GM12878 (cell line): ENCODE measurements at regions of chr17 and their contacts with region 1.

Region 1: GRCh38 chr17:3683054-3683511 is 12.9 kb downstream of the P2RX5 start:
- DNase-seq: peak; percentile 48
- ATAC-seq: peak; percentile 95
- H3K4me3 ChIP-seq: no peak overlapping the region
- H3K27ac ChIP-seq: no peak overlapping the region
- H3K4me1 ChIP-seq: peaks cover 6% of the 10 kb centered on the region; the same call in 1 of the 2 replicates
- H3K27me3 ChIP-seq: no peaks in the 10 kb centered on the region
- CTCF ChIP-seq: peak; percentile 85 to 98 (median 94)
- EP300 ChIP-seq: no peak
- POLR2A ChIP-seq: peak; percentile 44; the same call in 1 of the 2 replicates
- RAD21 ChIP-seq: peak; percentile 94

Region 2: GRCh38 chr17:3602499-3602898 is 80.6 kb before region 1 on chr17:
- CTCF ChIA-PET with region 1: no interaction called
- POLR2A ChIA-PET with region 1: no interaction called
- RAD21 ChIA-PET with region 1: no interaction called
- SMC1A ChIA-PET with region 1: no interaction called
- in situ Hi-C with region 1: no loop called
- intact Hi-C with region 1: no loop called
- DNase-seq: no peak
- ATAC-seq: peak; percentile 88
- H3K4me3 ChIP-seq: no peak overlapping the region
- H3K27ac ChIP-seq: no peak overlapping the region
- H3K4me1 ChIP-seq: no peaks in the 10 kb centered on the region
- H3K27me3 ChIP-seq: no peaks in the 10 kb centered on the region
- CTCF ChIP-seq: peak; percentile 40 to 69 (median 47)
- EP300 ChIP-seq: no peak
- POLR2A ChIP-seq: no peak
- RAD21 ChIP-seq: 0 out of 2 replicates have a peak, but pooled peaks have one; percentile 23

Region 3: DNA sequence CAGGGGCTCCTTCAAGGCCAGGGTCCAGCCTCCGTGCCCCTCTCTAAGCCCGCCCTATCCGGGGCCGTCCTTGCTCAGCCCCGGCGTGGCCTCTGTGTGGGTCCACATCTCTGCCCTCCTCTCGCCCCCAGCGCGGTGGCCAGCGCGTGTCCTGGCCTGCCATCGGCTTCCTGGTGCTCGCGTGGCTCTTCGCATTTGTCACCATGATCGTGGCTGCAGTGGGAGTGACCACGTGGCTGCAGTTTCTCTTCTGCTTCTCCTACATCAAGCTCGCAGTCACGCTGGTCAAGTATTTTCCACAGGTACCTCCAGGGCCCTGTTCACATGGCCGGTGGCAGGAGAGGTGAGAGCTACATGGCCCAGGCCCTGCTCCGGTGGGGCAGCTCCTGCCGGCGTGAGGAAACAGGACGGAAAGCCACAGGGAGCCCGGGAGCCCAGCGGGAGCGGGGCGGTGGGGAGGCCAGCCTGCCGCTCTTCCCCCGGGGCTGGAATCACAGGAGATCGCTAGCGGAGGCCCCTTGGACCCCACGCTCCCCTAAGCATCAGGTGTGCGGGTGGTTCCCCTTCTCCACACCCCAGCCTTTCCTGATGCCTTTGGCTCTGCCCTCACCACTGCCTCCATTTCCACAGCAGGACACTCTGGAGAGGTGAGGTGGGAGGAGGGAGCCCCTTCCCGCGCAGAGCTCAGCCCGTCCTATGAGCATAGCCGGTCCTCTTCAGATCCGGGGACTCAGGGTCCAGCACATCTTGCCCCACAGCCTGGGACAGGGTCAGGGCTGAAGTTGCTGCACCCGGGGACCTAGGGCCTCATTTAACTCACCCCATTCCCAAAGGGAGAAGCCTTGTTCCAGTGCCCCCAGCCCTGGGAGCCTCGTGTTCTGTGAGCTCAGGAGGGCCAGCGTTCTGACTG is 25.0 kb before region 1 on chr17:
- CTCF ChIA-PET with region 1: no interaction called
- POLR2A ChIA-PET with region 1: no interaction called
- RAD21 ChIA-PET with region 1: no interaction called
- SMC1A ChIA-PET with region 1: no interaction called
- in situ Hi-C with region 1: no loop called
- intact Hi-C with region 1: no loop called
- DNase-seq: no peak
- ATAC-seq: no peak
- H3K4me3 ChIP-seq: no peak overlapping the region
- H3K27ac ChIP-seq: no peak overlapping the region
- H3K4me1 ChIP-seq: no peaks in the 10 kb centered on the region
- H3K27me3 ChIP-seq: no peaks in the 10 kb centered on the region
- CTCF ChIP-seq: no peak
- EP300 ChIP-seq: no peak
- POLR2A ChIP-seq: no peak
- RAD21 ChIP-seq: no peak

Region 4: DNA sequence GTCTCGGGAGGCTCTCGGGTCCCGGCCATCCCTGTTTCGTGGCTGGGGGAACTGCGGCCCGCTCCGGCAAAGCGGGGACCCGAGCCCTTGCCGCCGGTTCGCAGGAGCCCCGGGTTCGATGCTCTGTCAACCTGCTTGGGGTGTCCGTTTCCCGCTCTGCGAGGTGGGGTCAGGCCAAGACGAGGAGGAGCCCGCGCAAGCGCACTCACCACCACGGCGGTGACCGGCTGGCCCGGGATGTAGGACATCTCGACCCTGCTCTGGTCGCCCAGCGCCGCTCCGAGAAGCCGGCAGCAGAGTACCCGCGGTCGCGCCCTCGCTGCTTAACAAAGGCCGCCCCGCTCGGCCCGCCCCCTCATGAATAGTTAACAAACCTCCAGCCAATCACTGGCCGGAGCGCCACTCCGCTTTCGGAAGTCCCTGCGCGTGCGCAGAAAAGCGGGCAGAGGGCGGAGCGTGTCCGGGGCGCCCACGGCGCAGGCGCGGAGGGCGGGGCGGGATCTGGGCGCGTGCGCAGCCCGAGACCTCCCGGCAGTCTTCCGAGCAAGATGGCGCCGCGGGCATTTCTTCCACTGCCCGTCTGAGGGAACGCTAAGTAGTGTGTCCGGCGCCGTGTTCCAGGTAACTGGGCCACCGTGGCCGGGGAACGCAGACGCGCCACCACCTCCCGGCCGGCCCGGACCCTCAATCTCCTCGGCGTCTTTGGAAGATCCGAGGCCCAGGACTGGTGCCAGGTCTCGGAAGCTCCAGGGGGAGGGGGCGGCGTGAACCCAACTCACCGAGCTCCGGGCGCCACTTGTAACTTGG is 14.6 kb before region 1 on chr17 and contains the starts of genes EMC6 and TAX1BP3:
- CTCF ChIA-PET with region 1: interaction called, 10 read pairs
- POLR2A ChIA-PET with region 1: interaction called, 7 read pairs
- RAD21 ChIA-PET with region 1: no interaction called
- SMC1A ChIA-PET with region 1: interaction called, 3 read pairs
- in situ Hi-C with region 1: no loop called
- intact Hi-C with region 1: no loop called
- DNase-seq: peak; percentile 86
- ATAC-seq: peak; percentile 97
- H3K4me3 ChIP-seq: peak within 1 kb of the TSS; percentile 84
- H3K27ac ChIP-seq: peak within 1 kb of the TSS; percentile 86
- H3K4me1 ChIP-seq: peaks cover 8% of the 10 kb centered on the region
- H3K27me3 ChIP-seq: no peaks in the 10 kb centered on the region
- CTCF ChIP-seq: no peak
- EP300 ChIP-seq: no peak
- POLR2A ChIP-seq: peak; percentile 96
- RAD21 ChIP-seq: no peak
- polyA plus RNA-seq, gene EMC6: 5.1 to 32.2 TPM
- polyA plus RNA-seq, gene TAX1BP3: 1.00 to 4.7 TPM

Region 5: DNA sequence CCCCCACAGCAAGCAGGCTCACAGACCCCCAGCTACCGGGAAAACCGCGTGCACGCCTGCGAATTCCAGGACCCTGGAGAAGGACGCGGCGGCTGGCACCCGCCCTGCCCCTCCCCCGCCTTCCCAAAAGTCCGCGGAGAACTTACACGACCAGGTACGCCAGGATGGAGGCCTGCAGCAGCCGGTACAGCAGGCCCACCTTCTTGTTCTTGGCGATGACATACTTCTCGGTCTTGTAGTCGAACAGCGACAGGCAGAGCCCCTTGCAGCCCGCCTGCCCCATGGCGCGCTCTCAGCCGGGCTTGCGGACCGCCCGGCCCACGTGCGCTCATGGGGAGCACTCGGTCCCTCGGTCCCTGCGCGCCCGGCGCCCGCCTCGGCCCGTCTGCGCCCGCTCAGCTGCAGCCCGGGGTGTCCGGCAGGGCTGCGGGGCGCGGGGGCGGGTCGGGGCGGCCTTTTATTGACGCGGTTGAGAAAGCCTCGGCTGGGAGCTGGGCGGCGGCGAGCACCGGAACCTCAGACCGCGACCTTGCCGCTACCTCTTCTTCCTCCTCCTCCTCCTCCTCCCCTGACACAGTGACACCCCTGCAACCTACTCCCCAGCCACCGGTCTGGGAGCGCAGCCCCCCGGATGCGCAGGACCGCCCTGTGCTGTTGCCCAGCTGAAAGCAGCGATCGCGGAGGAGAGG is 12.8 kb after region 1 on chr17 and contains the start of gene P2RX5:
- CTCF ChIA-PET with region 1: interaction called, 10 read pairs
- POLR2A ChIA-PET with region 1: no interaction called
- RAD21 ChIA-PET with region 1: interaction called, 4 read pairs
- SMC1A ChIA-PET with region 1: interaction called, 3 read pairs
- in situ Hi-C with region 1: no loop called
- intact Hi-C with region 1: no loop called
- DNase-seq: no peak
- ATAC-seq: peak; percentile 48
- H3K4me3 ChIP-seq: peak within 1 kb of the TSS; percentile 56
- H3K27ac ChIP-seq: peak within 1 kb of the TSS; percentile 61
- H3K4me1 ChIP-seq: peaks cover 32% of the 10 kb centered on the region
- H3K27me3 ChIP-seq: no peaks in the 10 kb centered on the region
- CTCF ChIP-seq: no peak
- EP300 ChIP-seq: no peak
- POLR2A ChIP-seq: peak; percentile 71
- RAD21 ChIP-seq: no peak
- polyA plus RNA-seq, gene P2RX5: 6.9 to 14.2 TPM

Region 6: GRCh38 chr17:3723556-3724369 is 40.7 kb after region 1 on chr17 and contains the start of gene HASPIN:
- CTCF ChIA-PET with region 1: interaction called, 13 read pairs
- POLR2A ChIA-PET with region 1: no interaction called
- RAD21 ChIA-PET with region 1: interaction called, 4 read pairs
- SMC1A ChIA-PET with region 1: interaction called, 4 read pairs
- in situ Hi-C with region 1: no loop called
- intact Hi-C with region 1: no loop called
- DNase-seq: peak; percentile 62
- ATAC-seq: peak; percentile 93
- H3K4me3 ChIP-seq: peak within 1 kb of the TSS; percentile 93
- H3K27ac ChIP-seq: peak within 1 kb of the TSS; percentile 87
- H3K4me1 ChIP-seq: peaks cover 17% of the 10 kb centered on the region
- H3K27me3 ChIP-seq: no peaks in the 10 kb centered on the region
- CTCF ChIP-seq: peak in 2 of 3 experiments; percentile 12 to 17; a peak in 1 of 6 replicates
- EP300 ChIP-seq: no peak
- POLR2A ChIP-seq: peak; percentile 83
- RAD21 ChIP-seq: no peak
- polyA plus RNA-seq, gene HASPIN: 0.80 to 0.97 TPM

Region 7: DNA sequence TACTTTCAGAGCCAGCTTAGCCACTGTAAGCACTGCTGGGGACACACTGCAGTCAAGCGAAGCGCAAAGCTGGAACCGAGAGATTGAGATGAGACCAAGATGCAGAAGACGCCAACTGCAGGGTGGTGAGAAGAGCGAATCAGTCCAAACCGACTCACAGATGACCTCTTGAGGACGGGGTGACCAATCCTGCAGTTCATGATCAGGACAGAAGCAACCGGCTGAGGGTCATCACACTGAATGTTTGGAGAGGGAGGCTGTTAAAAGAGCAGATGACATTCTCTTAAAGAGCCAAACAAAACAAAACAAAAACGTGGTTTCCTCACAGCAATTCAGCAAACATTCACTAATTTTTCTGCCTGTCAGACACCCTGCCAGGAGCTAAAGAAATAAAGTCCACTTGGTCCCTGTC is 49.1 kb after region 1 on chr17:
- CTCF ChIA-PET with region 1: interaction called, 105 read pairs
- POLR2A ChIA-PET with region 1: no interaction called
- RAD21 ChIA-PET with region 1: interaction called, 24 read pairs
- SMC1A ChIA-PET with region 1: interaction called, 17 read pairs
- in situ Hi-C with region 1: no loop called
- intact Hi-C with region 1: loop called (anchors 2 kb)
- DNase-seq: peak; percentile 60
- ATAC-seq: peak; percentile 98
- H3K4me3 ChIP-seq: no peak overlapping the region
- H3K27ac ChIP-seq: no peak overlapping the region
- H3K4me1 ChIP-seq: peaks cover 7% of the 10 kb centered on the region; the same call in 1 of the 2 replicates
- H3K27me3 ChIP-seq: no peaks in the 10 kb centered on the region
- CTCF ChIP-seq: peak; percentile 44 to 62 (median 48); a peak in 4 of 6 replicates
- EP300 ChIP-seq: no peak
- POLR2A ChIP-seq: no peak
- RAD21 ChIP-seq: peak; percentile 60

Region 8: DNA sequence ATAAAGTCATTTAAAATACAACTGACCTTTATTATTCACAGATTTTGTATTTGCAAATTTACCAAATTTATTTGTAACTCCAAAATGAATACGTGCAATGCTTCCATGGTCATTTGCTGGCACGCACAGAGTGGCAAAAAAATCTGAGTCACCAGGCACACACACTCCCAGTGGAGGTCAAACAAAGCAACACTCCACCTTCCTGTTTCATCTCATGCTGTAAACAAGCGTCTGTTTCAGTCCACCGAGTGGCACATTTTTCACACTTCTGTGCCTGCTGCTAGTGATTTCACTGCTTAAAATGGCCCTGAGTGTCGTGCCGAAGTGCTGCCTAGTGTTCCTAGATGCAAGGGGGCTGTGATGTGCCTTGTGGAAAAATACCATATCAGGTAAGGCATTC is 135.7 kb after region 1 on chr17:
- CTCF ChIA-PET with region 1: no interaction called
- POLR2A ChIA-PET with region 1: interaction called, 3 read pairs
- RAD21 ChIA-PET with region 1: no interaction called
- SMC1A ChIA-PET with region 1: no interaction called
- in situ Hi-C with region 1: loop called (anchors 5 kb)
- intact Hi-C with region 1: no loop called
- DNase-seq: no peak
- ATAC-seq: no peak
- H3K4me3 ChIP-seq: no peak overlapping the region
- H3K27ac ChIP-seq: no peak overlapping the region
- H3K4me1 ChIP-seq: peaks cover 6% of the 10 kb centered on the region; the same call in 1 of the 2 replicates
- H3K27me3 ChIP-seq: no peaks in the 10 kb centered on the region
- CTCF ChIP-seq: no peak
- EP300 ChIP-seq: no peak
- POLR2A ChIP-seq: no peak
- RAD21 ChIP-seq: no peak

Region 9: DNA sequence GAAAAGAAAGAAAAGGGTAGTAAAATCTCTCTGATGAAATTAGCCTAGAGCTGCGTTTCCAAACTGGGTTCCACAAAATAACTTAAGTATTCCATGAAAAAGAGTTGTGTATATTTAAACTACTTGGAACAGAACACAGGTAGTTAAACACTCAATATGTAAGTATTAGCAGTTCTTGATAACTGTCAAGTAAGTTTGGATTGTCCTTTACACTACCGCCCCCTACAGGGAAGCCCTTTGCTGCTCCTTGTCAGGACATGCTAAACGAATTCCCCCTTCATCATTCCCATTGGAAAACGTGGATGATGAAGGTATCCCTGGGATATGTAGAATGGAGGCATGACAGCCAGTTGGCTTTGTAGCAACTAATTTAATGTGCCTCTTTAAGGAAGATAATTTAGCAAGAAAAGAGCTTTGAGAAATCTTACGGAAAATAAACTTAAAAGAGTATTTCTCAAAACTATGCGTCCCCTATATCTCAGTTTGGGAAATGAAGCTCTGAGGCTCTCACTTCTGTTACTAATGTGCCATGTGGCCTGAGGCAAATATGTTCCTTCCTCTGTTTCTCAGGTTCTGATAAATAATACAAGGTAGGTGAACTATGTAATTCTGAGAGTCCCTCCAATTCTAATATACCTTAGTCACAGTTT is 144.2 kb after region 1 on chr17:
- CTCF ChIA-PET with region 1: interaction called, 26 read pairs
- POLR2A ChIA-PET with region 1: no interaction called
- RAD21 ChIA-PET with region 1: interaction called, 5 read pairs
- SMC1A ChIA-PET with region 1: interaction called, 7 read pairs
- in situ Hi-C with region 1: loop called (anchors 5 kb)
- intact Hi-C with region 1: loop called (anchors 2 kb)
- DNase-seq: no peak
- ATAC-seq: peak; percentile 65
- H3K4me3 ChIP-seq: no peak overlapping the region
- H3K27ac ChIP-seq: no peak overlapping the region
- H3K4me1 ChIP-seq: no peaks in the 10 kb centered on the region
- H3K27me3 ChIP-seq: no peaks in the 10 kb centered on the region
- CTCF ChIP-seq: peak; percentile 82 to 85 (median 82)
- EP300 ChIP-seq: no peak
- POLR2A ChIP-seq: no peak
- RAD21 ChIP-seq: peak; percentile 90